ENCODE measurements at regions of chr11 and their contacts with region 1.

Region 1: GRCh38 chr11:83456075-83456474 is 169.9 kb upstream of the CCDC90B start:
- DNase-seq: peak; percentile 50
- ATAC-seq: peak; percentile 97
- H3K4me3 Mint-ChIP-seq: no peak overlapping the region
- H3K27ac Mint-ChIP-seq: no peak overlapping the region
- H3K4me1 Mint-ChIP-seq: peaks cover 23% of the 10 kb centered on the region
- H3K27me3 Mint-ChIP-seq: no peaks in the 10 kb centered on the region
- CTCF ChIP-seq: no peak

Region 2: GRCh38 chr11:83819933-83820549 is 364.0 kb after region 1 on chr11:
- CTCF ChIA-PET with region 1: no interaction called
- POLR2A ChIA-PET with region 1: interaction called, 12 read pairs
- DNase-seq: no peak
- ATAC-seq: no peak
- H3K4me3 Mint-ChIP-seq: no peak overlapping the region
- H3K27ac Mint-ChIP-seq: no peak overlapping the region
- H3K4me1 Mint-ChIP-seq: no peaks in the 10 kb centered on the region
- H3K27me3 Mint-ChIP-seq: no peaks in the 10 kb centered on the region
- CTCF ChIP-seq: peak; percentile 39; the same call in 1 of the 2 replicates